ENCODE measurements at regions of chr10 and their contacts with region 1.

Region 1: DNA sequence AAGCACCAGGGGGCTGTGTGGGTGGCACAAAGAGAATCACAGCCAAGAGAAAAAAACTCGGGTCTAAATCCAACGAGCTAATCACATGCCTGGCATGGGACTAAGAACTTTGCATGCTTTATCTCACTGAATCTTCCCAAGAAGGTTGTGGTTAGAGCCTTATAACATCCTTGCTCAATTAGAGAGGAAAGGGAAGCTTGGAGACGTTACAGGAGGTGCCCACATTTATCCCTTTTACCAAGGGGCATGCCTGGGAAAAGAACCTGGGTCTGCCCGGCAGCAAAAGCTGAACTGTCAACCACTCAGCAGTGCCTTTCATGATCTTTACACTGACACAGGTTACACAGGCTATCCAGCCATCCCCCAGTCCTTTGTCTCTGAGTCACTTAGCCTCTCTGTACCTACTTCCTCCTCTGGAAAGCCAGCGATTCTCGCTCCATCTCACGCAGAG is 190.1 kb downstream of the PRPF18 start:
- DNase-seq: no peak
- ATAC-seq: no peak
- H3K4me3 Mint-ChIP-seq: no peak overlapping the region
- H3K27ac Mint-ChIP-seq: no peak overlapping the region
- H3K4me1 Mint-ChIP-seq: peaks cover 3% of the 10 kb centered on the region
- H3K27me3 Mint-ChIP-seq: peaks cover 4% of the 10 kb centered on the region

Region 2: DNA sequence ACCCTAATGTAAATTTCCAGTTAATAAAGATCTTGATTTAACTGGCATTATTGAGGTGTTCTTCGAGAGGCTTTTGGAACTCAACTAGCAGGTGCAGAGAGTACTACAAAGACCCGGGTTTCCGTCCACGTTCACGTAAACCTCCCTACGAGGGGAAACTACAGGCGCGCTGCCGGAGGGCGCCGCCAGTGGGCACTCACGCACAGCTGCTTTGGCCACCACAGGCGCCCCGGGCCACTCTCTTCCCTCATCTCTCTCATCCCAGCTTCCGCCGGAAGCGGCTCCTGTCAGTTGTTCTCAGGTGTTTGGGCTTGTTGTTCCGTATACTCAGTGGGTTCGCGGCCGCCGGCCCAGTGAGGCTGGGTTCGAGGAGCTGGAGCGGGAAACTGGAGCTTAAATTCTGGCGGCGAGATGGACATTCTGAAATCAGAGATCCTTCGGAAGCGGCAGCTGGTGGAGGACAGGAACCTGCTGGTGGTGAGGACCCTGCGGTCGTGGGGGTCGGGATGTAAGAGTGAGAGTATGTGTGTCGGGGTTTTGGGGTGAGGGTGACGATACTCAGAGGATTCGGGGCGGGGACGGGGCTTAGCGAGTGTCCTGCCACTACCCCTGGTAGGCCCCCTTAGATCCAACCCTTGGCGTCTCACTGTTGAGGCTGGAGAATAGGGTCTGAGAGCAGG is 190.1 kb before region 1 on chr10 and contains the start of gene PRPF18:
- CTCF ChIA-PET with region 1: interaction called, 4 read pairs
- POLR2A ChIA-PET with region 1: no interaction called
- intact Hi-C with region 1: loop called in 1 of 2 experiments (anchors 1 kb)
- DNase-seq: peak; percentile 97
- ATAC-seq: peak; percentile 100
- H3K4me3 Mint-ChIP-seq: peak within 1 kb of the TSS; percentile 99
- H3K27ac Mint-ChIP-seq: peak within 1 kb of the TSS; percentile 95
- H3K4me1 Mint-ChIP-seq: peaks cover 29% of the 10 kb centered on the region
- H3K27me3 Mint-ChIP-seq: peaks cover 8% of the 10 kb centered on the region
- total RNA-seq, gene PRPF18: 21.0 to 22.1 TPM

Region 3: DNA sequence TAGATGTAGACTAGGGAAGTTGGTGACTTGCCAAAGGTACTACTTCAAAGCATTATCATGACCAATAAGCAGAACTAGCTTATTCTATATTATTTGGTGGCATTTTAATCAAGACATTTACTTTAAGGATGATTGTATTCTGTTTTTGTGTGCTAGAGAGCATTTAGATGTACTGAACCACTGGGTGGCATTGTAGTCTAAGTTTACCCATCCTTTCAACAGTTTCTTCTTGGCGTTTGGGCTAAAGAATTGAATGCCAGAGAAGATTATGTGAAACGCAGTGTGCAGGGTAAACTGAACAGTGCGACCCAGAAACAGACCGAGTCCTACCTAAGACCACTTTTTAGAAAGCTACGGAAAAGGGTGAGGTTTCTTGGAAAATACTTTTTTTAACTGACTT is 163.4 kb before region 1 on chr10:
- CTCF ChIA-PET with region 1: no interaction called
- POLR2A ChIA-PET with region 1: no interaction called
- intact Hi-C with region 1: loop called (anchors 1 to 5 kb)
- DNase-seq: no peak
- ATAC-seq: no peak
- H3K4me3 Mint-ChIP-seq: no peak overlapping the region
- H3K27ac Mint-ChIP-seq: no peak overlapping the region
- H3K4me1 Mint-ChIP-seq: no peaks in the 10 kb centered on the region
- H3K27me3 Mint-ChIP-seq: no peaks in the 10 kb centered on the region

Region 4: DNA sequence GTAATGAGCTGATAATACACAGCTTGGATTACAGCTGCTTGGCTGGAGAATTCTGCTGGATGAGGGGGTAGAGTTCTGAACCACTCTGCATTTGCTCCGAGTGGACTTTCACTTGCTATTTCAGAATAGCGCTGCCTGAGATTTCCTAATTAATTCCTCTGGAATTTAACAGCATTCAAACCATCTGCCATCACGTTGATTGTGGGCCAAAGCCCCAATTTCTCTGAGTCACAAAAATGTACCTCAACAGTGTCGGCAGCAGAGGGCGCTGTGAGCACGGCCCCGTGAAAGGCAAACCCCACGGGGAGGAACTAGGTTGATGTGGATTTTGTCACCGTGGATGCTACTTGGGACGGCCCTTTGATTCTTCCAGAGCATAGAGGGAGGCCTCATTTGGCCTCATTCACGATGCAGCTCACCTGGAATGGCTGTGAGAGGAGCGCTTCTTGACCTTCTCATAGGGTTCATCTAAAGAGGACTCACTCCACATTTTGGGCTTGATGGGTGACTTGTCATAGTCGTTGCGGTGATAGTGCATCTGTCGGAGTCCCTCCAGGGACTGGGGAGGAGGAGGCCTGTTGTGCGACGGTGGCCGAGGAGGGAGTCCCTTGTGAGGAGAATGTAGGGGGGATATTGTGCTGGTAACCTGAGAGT is 116.9 kb before region 1 on chr10:
- CTCF ChIA-PET with region 1: interaction called, 23 read pairs
- POLR2A ChIA-PET with region 1: no interaction called
- intact Hi-C with region 1: loop called (anchors 1 kb)
- DNase-seq: peak; percentile 83
- ATAC-seq: peak; percentile 47
- H3K4me3 Mint-ChIP-seq: no peak overlapping the region
- H3K27ac Mint-ChIP-seq: no peak overlapping the region
- H3K4me1 Mint-ChIP-seq: peaks cover 17% of the 10 kb centered on the region
- H3K27me3 Mint-ChIP-seq: no peaks in the 10 kb centered on the region

Region 5: DNA sequence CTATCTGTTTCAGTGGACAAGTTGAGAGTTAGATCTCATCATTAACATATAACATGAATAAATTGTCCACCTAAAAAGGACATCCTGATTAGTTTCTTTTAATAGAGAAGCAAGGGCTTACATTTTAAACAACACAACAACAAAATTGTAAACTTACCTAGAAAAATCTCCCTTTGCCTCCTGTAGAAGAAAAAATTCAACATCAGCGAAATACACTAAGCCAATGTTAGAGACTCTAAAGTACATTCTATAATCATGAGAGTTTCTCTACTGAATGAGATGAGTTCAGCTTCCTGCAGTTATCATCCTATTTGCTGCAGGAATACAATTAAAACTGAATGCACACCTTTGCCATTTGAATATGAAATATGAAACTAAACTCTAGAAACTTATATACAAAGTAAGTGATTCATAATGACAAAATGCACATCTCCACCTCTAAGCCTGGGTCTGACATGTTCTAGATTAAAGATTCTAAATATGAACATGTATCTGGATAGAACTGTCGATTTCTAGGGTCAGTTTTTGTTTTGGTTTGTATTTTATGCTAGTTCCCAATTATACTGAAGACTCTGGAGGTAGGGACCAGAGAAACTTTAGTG is 15.3 kb before region 1 on chr10:
- CTCF ChIA-PET with region 1: interaction called, 10 read pairs
- POLR2A ChIA-PET with region 1: no interaction called
- intact Hi-C with region 1: no loop called
- DNase-seq: no peak
- ATAC-seq: peak; percentile 33
- H3K4me3 Mint-ChIP-seq: no peak overlapping the region
- H3K27ac Mint-ChIP-seq: no peak overlapping the region
- H3K4me1 Mint-ChIP-seq: peaks cover 7% of the 10 kb centered on the region
- H3K27me3 Mint-ChIP-seq: no peaks in the 10 kb centered on the region

Region 6: DNA sequence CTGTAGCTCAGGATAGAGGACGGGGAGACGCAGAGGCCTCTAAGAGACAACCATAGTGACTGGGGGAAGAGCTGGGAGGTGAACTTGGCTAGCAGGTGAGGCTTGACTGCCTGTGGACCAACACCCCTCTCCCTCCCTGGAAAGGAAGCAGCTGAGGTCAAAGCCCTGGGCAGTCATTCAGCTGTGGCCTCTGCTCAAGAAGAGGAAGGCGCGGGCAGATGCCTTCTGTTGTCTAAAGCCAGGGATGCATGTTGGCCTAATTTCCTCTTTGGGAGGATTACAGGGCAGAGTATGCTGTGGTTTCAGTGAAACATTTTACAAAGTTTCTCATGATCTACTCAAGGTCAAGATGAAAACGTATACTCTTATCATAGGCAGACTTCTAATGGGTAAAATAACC is 137.0 kb after region 1 on chr10:
- CTCF ChIA-PET with region 1: no interaction called
- POLR2A ChIA-PET with region 1: no interaction called
- intact Hi-C with region 1: no loop called
- DNase-seq: no peak
- ATAC-seq: no peak
- H3K4me3 Mint-ChIP-seq: no peak overlapping the region
- H3K27ac Mint-ChIP-seq: no peak overlapping the region
- H3K4me1 Mint-ChIP-seq: no peaks in the 10 kb centered on the region
- H3K27me3 Mint-ChIP-seq: no peaks in the 10 kb centered on the region